A673 (cell line): ENCODE measurements at regions of chr22 and their contacts with region 1.

Region 1: DNA sequence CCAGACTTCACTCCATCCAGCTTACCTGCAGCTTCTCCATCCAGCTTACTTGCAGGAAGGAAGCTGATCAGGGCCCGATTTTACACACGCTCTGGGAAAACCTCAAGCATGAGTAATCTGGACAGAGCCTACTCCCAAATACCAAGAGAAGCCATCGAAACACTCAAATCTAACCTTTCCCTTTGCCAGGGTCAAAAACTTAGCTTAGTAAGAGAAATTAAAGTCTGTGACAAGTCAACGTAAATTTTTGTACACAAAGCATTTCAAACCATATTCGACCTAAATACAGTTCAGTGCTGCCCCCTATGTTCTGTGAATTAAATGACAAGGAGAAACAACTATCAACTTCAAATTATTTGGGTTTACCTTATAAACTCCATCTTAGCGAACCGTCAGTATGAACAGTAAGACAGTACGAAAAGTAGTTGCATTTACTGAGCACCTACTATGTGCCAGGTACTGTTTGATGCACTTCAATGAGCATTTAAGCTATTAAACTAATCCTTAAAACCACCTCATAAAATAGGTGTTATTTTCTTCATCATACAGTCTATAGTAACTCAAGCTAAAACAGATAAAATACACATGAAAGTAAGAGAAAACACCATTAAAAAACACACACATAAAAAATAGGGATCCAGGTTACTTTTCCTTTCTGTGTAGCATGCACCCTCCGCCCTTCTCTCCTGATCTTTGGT is 36.9 kb downstream of the ARFGAP3 start:
- DNase-seq: peak; percentile 43
- H3K4me3 ChIP-seq: no peak overlapping the region
- H3K27ac ChIP-seq: no peak overlapping the region
- H3K4me1 ChIP-seq: no peaks in the 10 kb centered on the region
- H3K27me3 ChIP-seq: no peaks in the 10 kb centered on the region
- CTCF ChIP-seq: peak; percentile 62

Region 2: GRCh38 chr22:42662114-42663021 is 157.8 kb before region 1 on chr22:
- CTCF ChIA-PET with region 1: no interaction called
- POLR2A ChIA-PET with region 1: no interaction called
- intact Hi-C with region 1: loop called (anchors 5 kb)
- DNase-seq: peak; percentile 87
- H3K4me3 ChIP-seq: peak overlapping the region; percentile 62
- H3K27ac ChIP-seq: peak overlapping the region; percentile 43
- H3K4me1 ChIP-seq: no peaks in the 10 kb centered on the region
- H3K27me3 ChIP-seq: no peaks in the 10 kb centered on the region
- CTCF ChIP-seq: peak; percentile 91

Region 3: DNA sequence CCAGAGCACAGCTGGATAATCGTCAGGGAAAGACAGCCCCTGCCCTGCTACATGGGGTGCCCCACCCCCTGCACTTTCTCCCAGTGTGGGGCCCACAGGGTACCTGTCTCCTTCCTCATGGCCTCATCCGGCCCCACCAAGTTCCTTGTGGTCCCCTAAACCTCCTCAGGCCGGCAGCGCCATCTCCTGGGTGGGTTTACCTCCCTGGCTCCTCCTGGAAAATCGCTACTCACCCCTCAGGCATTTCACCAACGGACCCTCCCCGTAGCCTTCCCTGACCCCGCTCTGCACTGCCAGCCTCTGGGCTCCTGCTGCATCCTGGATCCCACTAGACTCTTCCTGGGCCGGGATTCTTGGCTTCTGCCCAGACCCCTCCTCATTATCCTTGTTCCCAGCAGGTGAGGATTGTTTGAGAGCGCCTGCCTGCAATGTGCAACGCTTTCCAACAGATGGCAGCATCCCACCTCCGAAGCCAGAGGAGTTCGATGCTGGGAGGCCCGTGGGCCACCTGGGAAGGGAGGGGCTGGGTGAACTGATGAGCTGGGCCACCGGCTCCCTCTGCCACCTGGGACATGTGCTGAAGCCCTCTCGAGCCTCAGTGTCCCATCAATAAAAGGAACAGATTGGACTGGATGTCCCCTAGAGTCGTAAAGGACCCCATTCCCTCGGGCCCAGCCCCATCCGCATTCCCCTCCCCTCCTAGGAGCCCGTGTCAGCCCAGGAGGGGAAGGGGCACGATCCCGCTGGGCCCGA is 410.9 kb after region 1 on chr22:
- CTCF ChIA-PET with region 1: no interaction called
- POLR2A ChIA-PET with region 1: interaction called, 31 read pairs
- intact Hi-C with region 1: no loop called
- DNase-seq: peak; percentile 71
- H3K4me3 ChIP-seq: no peak overlapping the region
- H3K27ac ChIP-seq: no peak overlapping the region
- H3K4me1 ChIP-seq: peaks cover 13% of the 10 kb centered on the region
- H3K27me3 ChIP-seq: no peaks in the 10 kb centered on the region
- CTCF ChIP-seq: peak; percentile 97